ENCODE measurements at regions of chr16 and their contacts with region 1.

Region 1: GRCh38 chr16:50210266-50211038 is 55.9 kb upstream of the ADCY7 start:
- DNase-seq: no peak
- H3K4me3 ChIP-seq: no peak overlapping the region
- H3K27ac ChIP-seq: peak overlapping the region in 2 of 4 donors; percentile 10 to 40
- H3K4me1 ChIP-seq: peaks cover 0 to 45% (median 22%) of the 10 kb centered on the region in 3 donors
- H3K27me3 ChIP-seq: no peaks in the 10 kb centered on the region
- CTCF ChIP-seq: peak; percentile 36 to 77 (median 58)
- POLR2A ChIP-seq: no peak

Region 2: DNA sequence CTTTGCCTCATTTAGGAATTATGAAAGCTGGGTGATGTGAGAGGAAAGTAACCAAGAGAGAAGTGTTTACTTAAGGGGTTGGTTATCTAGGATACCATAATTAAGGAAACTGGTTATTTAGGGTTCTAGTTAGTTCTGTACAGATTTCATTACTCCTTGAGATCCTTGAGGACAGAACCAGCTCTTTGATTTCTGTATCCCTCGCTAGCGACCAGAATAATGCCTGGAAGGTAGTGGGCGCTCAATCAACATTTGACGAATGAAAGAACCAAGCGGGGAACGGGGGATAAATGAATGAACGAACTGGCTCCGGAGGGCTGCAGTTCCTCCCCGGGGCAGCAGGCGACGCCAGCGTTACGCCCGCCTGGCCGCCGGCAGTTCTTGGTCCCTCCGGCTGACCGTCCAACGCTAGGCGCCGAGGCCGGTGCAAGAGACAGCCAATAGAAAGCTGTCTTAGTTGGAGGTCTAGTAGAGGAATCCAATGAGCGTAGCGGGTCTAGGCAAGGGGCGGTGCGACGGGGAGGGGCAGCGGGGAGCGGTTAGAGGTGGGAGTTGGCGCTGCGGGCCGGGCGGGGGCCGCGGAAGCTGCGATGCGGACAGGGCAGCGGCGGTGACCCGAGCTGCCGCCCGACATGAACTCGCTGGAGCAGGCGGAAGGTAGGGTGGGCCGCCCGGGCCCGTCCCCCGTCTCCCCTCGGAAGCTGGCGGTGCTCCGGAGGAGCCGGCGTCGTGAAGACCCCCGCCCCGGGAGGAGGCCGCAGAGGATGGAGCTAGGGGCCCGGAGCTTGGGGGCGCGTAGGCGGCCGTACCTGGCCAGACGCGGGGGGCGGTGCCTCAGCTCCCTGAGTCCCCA is 185.5 kb before region 1 on chr16 and contains the start of gene CNEP1R1:
- intact Hi-C with region 1: loop called (anchors 10 kb)
- DNase-seq: peak; percentile 80
- H3K4me3 ChIP-seq: peak within 1 kb of the TSS; percentile 87 to 98 (median 97)
- H3K27ac ChIP-seq: peak within 1 kb of the TSS; percentile 88 to 95 (median 92)
- H3K4me1 ChIP-seq: peaks cover 0 to 39% (median 16%) of the 10 kb centered on the region in 3 donors
- H3K27me3 ChIP-seq: no peaks in the 10 kb centered on the region
- CTCF ChIP-seq: peak; percentile 99 to 100 (median 100)
- POLR2A ChIP-seq: peak in 2 of 4 donors; percentile 57 to 75
- total RNA-seq, gene CNEP1R1: 14.1 to 18.4 (median 14.9) TPM

Region 3: DNA sequence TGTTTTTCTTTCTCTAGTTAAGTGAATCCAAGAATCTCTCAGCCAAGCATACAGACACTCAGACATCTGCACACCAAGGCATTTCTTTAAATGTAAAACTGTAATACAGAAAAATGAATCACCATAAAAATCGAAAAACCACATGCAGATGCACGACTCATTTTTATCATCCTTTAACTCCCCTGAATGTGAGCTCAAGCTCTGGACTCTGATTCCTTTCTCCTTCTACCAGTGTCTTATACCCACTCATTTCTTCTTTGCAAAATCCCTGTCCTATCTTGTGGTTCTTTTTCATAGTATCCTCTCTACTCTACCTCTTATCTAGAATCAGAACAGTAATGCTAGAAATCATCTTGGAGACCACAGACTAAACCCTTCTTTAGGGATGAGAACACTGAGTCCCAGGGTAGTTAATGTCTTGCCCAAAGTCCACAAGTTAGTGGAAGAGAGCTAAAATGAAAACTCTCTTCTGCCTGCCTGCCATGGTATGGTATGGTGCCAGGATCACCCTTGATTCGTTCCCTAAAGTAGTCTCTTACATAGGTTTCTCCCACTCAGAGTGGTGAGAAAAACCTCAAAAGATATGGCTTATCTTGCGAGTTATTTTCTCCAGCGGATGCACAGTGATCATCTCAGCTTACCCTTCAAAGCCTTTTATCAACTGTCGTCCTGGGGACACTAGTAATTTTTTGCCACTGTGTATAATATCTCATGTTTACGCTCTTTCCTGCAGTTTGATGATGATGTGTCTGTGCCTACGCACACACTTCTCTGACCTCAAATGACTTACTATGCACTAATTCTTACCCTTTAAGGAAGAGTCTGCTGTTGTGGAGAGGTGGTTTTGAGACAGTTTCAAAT is 128.1 kb after region 1 on chr16:
- intact Hi-C with region 1: no loop called
- DNase-seq: no peak
- H3K4me3 ChIP-seq: no peak overlapping the region
- H3K27ac ChIP-seq: peak overlapping the region in 3 of 4 donors; percentile 21 to 36 (median 29)
- H3K4me1 ChIP-seq: peaks cover 0 to 32% (median 0%) of the 10 kb centered on the region in 3 donors
- H3K27me3 ChIP-seq: no peaks in the 10 kb centered on the region
- CTCF ChIP-seq: no peak
- POLR2A ChIP-seq: no peak

Measured in esophagus squamous epithelium (tissue), 5 donors.